Heart left ventricle (tissue), 16 donors: ENCODE measurements at regions of chr2 and their contacts with region 1.

Region 1: GRCh38 chr2:216698895-216699294 is 3.5 kb upstream of the IGFBP5 start:
- DNase-seq: peak in 1 of 5 donors; percentile 41
- ATAC-seq: peak; percentile 16 to 64 (median 55)
- H3K4me3 ChIP-seq: no peak overlapping the region
- H3K27ac ChIP-seq: peak overlapping the region in 8 of 12 donors; percentile 5 to 88 (median 30)
- H3K4me1 ChIP-seq: peaks cover 0 to 69% (median 30%) of the 10 kb centered on the region in 12 donors
- H3K27me3 ChIP-seq: peaks cover 0 to 37% (median 0%) of the 10 kb centered on the region in 9 donors
- CTCF ChIP-seq: peak; percentile 48 to 84 (median 71)
- POLR2A ChIP-seq: no peak

Region 2: GRCh38 chr2:216596236-216596979 is 102.5 kb before region 1 on chr2:
- intact Hi-C with region 1: no loop called
- DNase-seq: peak in 3 of 5 donors; percentile 31 to 50 (median 35)
- ATAC-seq: peak in 2 of 4 donors; percentile 33 to 61
- H3K4me3 ChIP-seq: no peak overlapping the region
- H3K27ac ChIP-seq: peak overlapping the region in 1 of 12 donors; percentile 26
- H3K4me1 ChIP-seq: peaks cover 0 to 25% (median 14%) of the 10 kb centered on the region in 12 donors
- H3K27me3 ChIP-seq: no peaks in the 10 kb centered on the region
- CTCF ChIP-seq: no peak
- POLR2A ChIP-seq: no peak

Region 3: DNA sequence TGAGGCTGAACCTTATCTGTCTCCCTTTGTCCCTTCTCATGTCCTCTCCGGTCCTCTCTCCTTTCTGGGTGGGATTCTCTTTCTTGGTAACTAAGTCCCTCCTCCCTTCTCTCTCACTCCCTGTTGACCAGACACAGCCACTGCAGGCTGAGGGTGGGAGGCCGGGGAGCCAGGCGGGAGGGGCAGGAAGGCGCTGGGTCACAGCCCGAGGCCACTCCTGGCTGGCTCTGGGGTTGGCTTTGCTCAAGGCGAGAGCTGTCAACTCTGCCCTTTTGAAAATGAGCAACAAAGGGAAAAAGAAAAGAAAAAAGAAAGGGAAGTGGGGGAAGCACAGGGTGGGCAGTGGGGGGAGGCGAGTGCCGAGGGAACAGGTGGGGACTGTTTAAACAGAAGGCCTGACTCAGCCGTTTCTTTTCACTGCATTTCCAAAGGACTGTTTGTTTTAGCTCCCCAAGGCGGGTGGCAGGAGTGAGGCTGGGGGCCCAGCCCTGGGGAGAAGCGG is 66.9 kb after region 1 on chr2:
- intact Hi-C with region 1: loop called in 5 of 10 experiments (anchors 5 to 10 kb)
- DNase-seq: peak; percentile 40 to 72 (median 56)
- ATAC-seq: peak; percentile 37 to 90 (median 84)
- H3K4me3 ChIP-seq: peak overlapping the region in 1 of 12 donors; percentile 7
- H3K27ac ChIP-seq: peak overlapping the region in 4 of 12 donors; percentile 16 to 64 (median 45)
- H3K4me1 ChIP-seq: peaks cover 0 to 26% (median 12%) of the 10 kb centered on the region in 12 donors
- H3K27me3 ChIP-seq: no peaks in the 10 kb centered on the region
- CTCF ChIP-seq: peak in 3 of 12 donors; percentile 18 to 38 (median 21)
- POLR2A ChIP-seq: no peak

Region 4: DNA sequence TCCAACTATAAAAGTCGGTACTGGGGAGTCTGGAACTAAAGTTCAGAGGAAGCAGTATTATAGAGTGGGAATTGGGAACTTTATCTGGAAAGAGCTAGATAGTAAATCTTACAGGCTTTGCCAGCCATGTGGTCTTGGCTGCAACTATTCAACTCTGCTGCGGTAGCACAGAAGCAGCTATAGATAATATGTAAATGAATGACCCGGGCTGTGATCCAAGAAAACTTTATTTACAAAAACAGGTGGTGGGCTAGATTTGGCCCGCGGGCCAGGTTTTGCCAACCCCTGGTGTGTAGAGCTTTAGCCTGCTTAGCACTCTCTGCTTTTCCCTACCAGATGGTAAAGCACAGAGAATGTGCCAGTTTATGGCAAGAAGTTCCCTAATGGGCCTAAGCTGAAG is 90.2 kb after region 1 on chr2:
- intact Hi-C with region 1: no loop called
- DNase-seq: no peak
- ATAC-seq: no peak
- H3K4me3 ChIP-seq: no peak overlapping the region
- H3K27ac ChIP-seq: no peak overlapping the region
- H3K4me1 ChIP-seq: peaks cover 0 to 25% (median 9%) of the 10 kb centered on the region in 12 donors
- H3K27me3 ChIP-seq: no peaks in the 10 kb centered on the region
- CTCF ChIP-seq: no peak
- POLR2A ChIP-seq: no peak

Region 5: DNA sequence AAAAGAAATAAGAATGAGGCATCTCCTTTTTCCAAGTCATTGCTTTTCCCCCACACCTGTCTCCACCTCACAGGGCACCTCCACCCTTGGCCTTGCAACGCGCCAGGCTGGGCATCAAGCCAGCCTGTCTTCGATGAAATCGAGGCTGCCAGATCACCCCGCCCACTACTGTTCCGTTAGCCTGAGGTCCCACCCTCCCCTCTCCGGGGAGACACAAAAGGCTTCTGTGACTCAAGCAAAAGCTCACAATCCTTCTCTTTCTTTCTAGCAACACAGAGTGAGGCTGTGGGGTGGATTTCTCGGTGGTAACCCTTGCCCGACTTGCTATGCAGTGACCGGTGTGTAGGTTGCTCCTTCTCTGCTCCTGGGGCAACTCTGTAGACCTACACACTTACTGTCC is 151.1 kb after region 1 on chr2:
- intact Hi-C with region 1: loop called in 2 of 10 experiments (anchors 5 to 10 kb)
- DNase-seq: peak; percentile 66 to 82 (median 81)
- ATAC-seq: peak; percentile 57 to 93 (median 90)
- H3K4me3 ChIP-seq: no peak overlapping the region
- H3K27ac ChIP-seq: peak overlapping the region in 3 of 12 donors; percentile 2 to 46 (median 4)
- H3K4me1 ChIP-seq: peaks cover 0 to 33% (median 13%) of the 10 kb centered on the region in 12 donors
- H3K27me3 ChIP-seq: no peaks in the 10 kb centered on the region
- CTCF ChIP-seq: no peak
- POLR2A ChIP-seq: no peak

Region 6: DNA sequence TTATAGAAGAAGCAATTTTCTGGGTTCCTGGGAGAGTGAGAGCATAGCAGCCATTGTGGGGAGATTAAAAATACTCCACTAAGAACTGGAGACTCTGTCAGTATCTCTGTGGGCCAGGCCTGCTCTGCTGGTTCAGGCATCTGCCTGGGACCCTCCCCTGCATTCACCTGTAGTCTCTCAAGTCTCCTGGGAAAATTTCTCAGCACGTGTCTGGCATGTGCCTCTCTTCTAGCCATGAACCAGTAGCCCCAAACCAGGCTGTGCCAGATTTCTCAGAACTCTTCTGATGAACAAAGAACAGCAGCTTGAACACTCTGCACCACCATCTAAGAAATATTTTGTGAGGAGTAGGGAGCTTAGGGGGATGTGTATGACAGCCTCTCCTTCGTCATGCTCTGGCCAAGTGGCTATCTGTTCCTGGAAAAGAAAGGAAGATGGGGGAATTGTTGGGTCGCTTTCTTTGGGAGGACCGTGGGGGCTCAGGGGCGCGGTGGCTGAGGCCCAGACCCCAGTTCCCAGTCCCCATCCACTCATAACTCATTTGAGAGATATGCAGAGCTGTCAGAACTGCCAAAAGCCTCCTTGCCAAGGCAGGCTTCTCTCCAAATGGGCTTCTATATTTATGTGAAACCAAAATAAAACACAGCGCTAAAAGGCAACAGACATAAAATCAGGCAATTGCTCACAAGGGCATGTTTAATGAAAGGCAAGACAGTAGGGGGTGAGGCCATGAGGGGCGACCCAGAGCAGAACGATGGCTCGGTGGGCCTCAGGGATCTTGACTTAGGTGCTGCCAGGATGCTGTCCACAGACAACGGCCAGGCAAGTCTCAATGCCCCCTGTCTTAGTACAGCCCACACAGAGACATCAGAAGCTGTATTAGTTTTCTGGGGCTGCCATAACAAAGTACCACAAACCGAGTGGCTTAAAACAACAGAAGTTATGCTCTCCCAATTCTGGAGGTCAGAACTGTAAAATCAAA is 275.7 kb after region 1 on chr2:
- intact Hi-C with region 1: loop called in 1 of 10 experiments (anchors 10 kb)
- DNase-seq: peak in 2 of 5 donors; percentile 34 to 53
- ATAC-seq: peak; percentile 51 to 83 (median 74)
- H3K4me3 ChIP-seq: no peak overlapping the region
- H3K27ac ChIP-seq: peak overlapping the region in 6 of 12 donors; percentile 12 to 72 (median 46)
- H3K4me1 ChIP-seq: peaks cover 0 to 25% (median 7%) of the 10 kb centered on the region in 12 donors
- H3K27me3 ChIP-seq: no peaks in the 10 kb centered on the region
- CTCF ChIP-seq: no peak
- POLR2A ChIP-seq: no peak

Region 7: DNA sequence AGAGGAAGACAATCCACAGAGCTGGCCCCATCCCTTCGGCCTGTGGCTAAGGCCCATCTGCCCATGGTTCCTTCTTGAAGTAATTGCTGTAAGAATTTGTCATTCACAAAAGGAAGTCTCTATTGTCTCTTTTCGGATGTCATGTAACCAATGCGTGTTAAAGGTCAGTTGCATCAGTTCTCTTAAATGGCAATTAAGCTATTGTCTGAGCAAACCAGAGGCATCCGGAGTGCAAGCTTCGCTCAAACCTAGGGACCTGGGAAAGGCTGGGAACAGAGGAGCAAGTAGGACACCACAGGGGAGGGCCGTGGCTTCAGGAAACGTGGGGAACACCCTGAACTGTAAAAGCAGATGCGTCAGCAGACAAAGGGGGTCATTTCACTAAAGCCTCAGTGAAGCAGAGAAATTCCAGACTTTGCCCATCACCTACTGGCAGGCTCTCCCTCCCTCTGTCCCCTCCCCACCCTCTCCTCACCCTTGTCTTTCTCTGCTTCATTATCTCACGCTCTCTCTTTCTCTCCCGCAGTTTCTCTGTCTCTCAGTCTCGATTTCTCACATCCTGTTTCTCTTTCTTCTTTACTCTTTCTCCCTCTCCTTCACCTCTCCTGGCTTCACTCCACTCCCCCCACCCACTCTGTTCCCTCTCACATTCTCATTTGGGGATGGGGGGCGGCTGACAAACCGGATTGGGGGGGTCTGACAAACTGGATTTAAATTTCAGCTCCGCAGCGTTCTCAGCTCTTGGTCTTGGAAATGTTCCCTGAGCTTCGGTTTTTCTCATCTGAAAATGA is 365.5 kb after region 1 on chr2:
- intact Hi-C with region 1: loop called in 8 of 10 experiments (anchors 5 to 10 kb)
- DNase-seq: peak in 3 of 5 donors; percentile 47 to 75 (median 52)
- ATAC-seq: peak; percentile 51 to 96 (median 82)
- H3K4me3 ChIP-seq: peak overlapping the region in 4 of 12 donors; percentile 10 to 38 (median 16)
- H3K27ac ChIP-seq: peak overlapping the region in 10 of 12 donors; percentile 15 to 69 (median 47)
- H3K4me1 ChIP-seq: peaks cover 0 to 25% (median 8%) of the 10 kb centered on the region in 12 donors
- H3K27me3 ChIP-seq: no peaks in the 10 kb centered on the region
- CTCF ChIP-seq: no peak
- POLR2A ChIP-seq: no peak

Region 8: DNA sequence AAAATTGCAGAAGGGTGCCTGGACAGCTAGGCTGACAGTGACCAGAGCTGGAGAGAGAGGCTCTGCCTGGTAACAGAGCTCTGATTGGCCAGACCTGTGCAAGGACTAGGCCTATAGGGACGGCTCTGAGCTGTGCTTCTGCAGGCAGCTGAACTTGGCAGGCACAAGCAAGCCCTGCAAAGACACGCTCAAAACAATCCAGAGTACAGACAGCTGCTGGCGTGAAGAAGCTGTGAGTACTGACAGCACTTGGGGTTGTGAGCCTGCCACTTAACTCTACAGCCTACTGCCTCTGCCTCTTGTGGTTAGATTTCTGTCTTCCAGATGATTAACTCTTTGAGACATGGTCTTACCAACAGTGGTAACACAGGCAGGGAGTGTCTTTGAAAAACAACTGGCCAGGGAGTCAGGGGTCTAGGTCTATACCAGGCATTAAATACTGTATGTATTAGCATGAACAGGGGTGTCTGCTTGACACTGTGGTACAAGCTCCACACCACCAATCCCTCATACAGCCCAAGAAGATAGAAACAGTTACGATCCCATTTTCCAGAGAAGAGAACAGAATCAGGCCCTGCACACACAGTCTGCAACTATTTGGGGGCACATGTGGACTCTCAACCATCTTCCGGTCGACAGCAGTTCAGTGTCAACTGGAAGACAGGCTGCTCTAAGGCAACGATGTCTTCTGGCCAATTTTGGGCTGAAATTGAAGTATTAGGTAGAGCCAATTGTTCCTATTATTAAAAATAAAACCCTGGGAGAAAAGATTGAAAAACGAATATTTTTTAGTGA is 735.5 kb after region 1 on chr2:
- intact Hi-C with region 1: loop called in 3 of 10 experiments (anchors 5 to 10 kb)
- DNase-seq: peak; percentile 87 to 96 (median 93)
- ATAC-seq: peak; percentile 98 to 99 (median 99)
- H3K4me3 ChIP-seq: peak overlapping the region in 7 of 12 donors; percentile 11 to 30 (median 22)
- H3K27ac ChIP-seq: peak overlapping the region in 11 of 12 donors; percentile 44 to 80 (median 71)
- H3K4me1 ChIP-seq: peaks cover 0 to 71% (median 48%) of the 10 kb centered on the region in 12 donors
- H3K27me3 ChIP-seq: no peaks in the 10 kb centered on the region
- CTCF ChIP-seq: peak in 1 of 12 donors; percentile 12
- POLR2A ChIP-seq: no peak

Region 9: DNA sequence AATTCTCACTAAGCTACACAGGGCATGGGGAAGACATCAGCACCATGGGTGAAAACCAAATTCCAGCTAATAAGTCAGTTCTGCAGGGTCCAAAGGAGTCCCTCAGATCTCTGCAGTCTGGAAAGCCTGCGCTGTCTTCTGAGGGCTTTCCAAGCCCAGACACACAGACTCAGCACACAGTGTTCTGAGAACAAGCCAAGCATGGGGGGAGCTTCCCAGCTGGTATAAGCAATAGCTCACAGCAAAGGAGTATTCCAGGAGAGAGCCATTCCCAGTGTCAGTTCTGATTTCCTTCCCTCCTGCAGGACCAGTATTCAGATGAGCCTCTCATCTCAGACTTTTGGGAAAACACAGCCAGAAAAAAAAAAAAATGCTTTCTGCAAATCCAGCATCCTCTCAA is 933.1 kb after region 1 on chr2:
- intact Hi-C with region 1: loop called in 1 of 10 experiments (anchors 10 kb)
- DNase-seq: peak in 1 of 5 donors; percentile 49
- ATAC-seq: peak; percentile 57 to 83 (median 70)
- H3K4me3 ChIP-seq: no peak overlapping the region
- H3K27ac ChIP-seq: peak overlapping the region in 1 of 12 donors; percentile 12
- H3K4me1 ChIP-seq: peaks cover 0 to 51% (median 17%) of the 10 kb centered on the region in 12 donors
- H3K27me3 ChIP-seq: no peaks in the 10 kb centered on the region
- CTCF ChIP-seq: no peak
- POLR2A ChIP-seq: no peak